Aorta (tissue), 5 donors: ENCODE measurements at regions of chr9 and their contacts with region 1.

Region 1: GRCh38 chr9:68779558-68780384 is 74.7 kb downstream of the PIP5K1B start:
- DNase-seq: peak; percentile 97 to 99
- ATAC-seq: peak; percentile 99
- H3K4me3 ChIP-seq: peak overlapping the region; percentile 73 to 87
- H3K27ac ChIP-seq: peak overlapping the region; percentile 36 to 99
- H3K4me1 ChIP-seq: peaks cover 6 to 12% of the 10 kb centered on the region in 2 donors
- H3K27me3 ChIP-seq: no peaks in the 10 kb centered on the region

Region 2: GRCh38 chr9:68822596-68823165 is 42.9 kb after region 1 on chr9:
- intact Hi-C with region 1: loop called in 1 of 2 experiments (anchors 5 kb)
- DNase-seq: no peak
- ATAC-seq: peak; percentile 29
- H3K4me3 ChIP-seq: no peak overlapping the region
- H3K27ac ChIP-seq: peak overlapping the region in 1 of 2 donors; percentile 36
- H3K4me1 ChIP-seq: peaks cover 3 to 8% of the 10 kb centered on the region in 2 donors
- H3K27me3 ChIP-seq: no peaks in the 10 kb centered on the region

Region 3: GRCh38 chr9:68832853-68833518 is 53.2 kb after region 1 on chr9:
- intact Hi-C with region 1: loop called in 1 of 2 experiments (anchors 5 kb)
- DNase-seq: no peak
- ATAC-seq: peak; percentile 39
- H3K4me3 ChIP-seq: no peak overlapping the region
- H3K27ac ChIP-seq: peak overlapping the region; percentile 31 to 83
- H3K4me1 ChIP-seq: peaks cover 0 to 6% of the 10 kb centered on the region in 2 donors
- H3K27me3 ChIP-seq: no peaks in the 10 kb centered on the region

Region 4: GRCh38 chr9:68844631-68845612 is 65.2 kb after region 1 on chr9:
- intact Hi-C with region 1: loop called in 1 of 2 experiments (anchors 5 kb)
- DNase-seq: peak; percentile 62 to 81
- ATAC-seq: peak; percentile 58
- H3K4me3 ChIP-seq: no peak overlapping the region
- H3K27ac ChIP-seq: no peak overlapping the region
- H3K4me1 ChIP-seq: no peaks in the 10 kb centered on the region
- H3K27me3 ChIP-seq: no peaks in the 10 kb centered on the region

Region 5: DNA sequence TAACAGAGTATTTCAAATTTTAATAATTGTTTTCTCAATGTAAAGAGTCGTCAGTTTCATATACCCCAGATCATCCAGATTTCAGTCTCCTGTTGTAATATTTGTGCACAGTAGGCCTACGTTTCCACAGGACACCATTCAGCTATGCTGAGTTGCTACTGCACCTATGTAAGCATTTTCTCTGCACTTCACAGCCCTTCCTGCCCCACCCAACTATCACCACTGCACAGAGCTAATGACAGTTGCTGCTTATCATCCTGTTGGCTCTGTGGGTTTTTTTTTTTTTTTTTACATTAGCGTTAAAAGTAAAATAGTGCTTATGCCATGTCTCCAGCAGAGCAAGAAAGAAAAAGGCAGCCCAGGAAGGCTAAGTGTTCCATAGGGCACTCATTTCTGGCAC is 240.0 kb after region 1 on chr9:
- intact Hi-C with region 1: no loop called
- DNase-seq: no peak
- ATAC-seq: no peak
- H3K4me3 ChIP-seq: no peak overlapping the region
- H3K27ac ChIP-seq: no peak overlapping the region
- H3K4me1 ChIP-seq: no peaks in the 10 kb centered on the region
- H3K27me3 ChIP-seq: no peaks in the 10 kb centered on the region